Activated CD8-positive, alpha-beta T cell treated with anti-CD3 and anti-CD28 coated beads, Interleukin-2, amount 10 ng/mL, durations not matched to agents 7 days and 5 days (primary cell): ENCODE measurements at regions of chr20 and their contacts with region 1.

Region 1: DNA sequence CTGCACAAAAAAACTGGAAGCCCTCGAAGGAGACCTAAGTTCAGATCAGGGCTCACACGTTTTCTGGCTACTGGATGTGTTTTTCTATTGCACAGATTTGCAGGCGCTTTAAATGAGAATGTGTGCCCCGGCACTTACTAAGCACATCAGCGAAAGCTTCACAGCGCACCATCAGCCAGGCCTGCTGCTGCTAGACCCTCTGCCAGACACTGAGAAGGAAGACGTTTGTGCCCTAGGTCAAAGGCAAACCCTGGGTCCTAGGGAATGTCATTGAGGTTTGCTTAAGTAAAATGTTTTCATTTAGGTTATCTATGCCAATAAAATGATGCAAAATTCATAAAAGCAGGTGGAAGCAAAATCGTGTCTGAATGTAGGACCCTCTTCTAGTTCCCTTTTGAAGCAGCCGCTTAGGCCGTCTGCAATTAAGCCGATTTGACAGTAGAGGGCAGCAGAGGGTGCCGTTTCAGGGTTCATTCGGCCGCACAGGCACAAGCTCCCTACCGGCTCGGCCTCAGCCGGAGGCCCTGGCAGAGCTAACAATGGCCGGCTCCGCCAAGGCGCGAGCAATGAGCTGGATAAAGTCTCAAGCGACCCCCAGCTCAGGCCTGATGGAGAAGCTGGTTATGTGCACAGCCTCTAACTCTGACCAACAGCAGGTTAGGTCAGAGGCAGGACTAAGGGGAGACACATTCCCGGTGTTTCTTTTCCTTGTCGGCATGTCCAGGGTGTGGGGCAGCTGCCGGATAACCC is 107.2 kb upstream of the FOXA2 start:
- DNase-seq: peak; percentile 70
- ATAC-seq: peak; percentile 76
- H3K4me3 Mint-ChIP-seq: no peak overlapping the region
- H3K27ac Mint-ChIP-seq: no peak overlapping the region
- H3K4me1 Mint-ChIP-seq: no peaks in the 10 kb centered on the region
- H3K27me3 Mint-ChIP-seq: no peaks in the 10 kb centered on the region

Region 2: GRCh38 chr20:22623226-22623625 is 68.3 kb before region 1 on chr20:
- CTCF ChIA-PET with region 1: no interaction called
- POLR2A ChIA-PET with region 1: no interaction called
- DNase-seq: no peak
- ATAC-seq: no peak
- H3K4me3 Mint-ChIP-seq: no peak overlapping the region
- H3K27ac Mint-ChIP-seq: no peak overlapping the region
- H3K4me1 Mint-ChIP-seq: no peaks in the 10 kb centered on the region
- H3K27me3 Mint-ChIP-seq: no peaks in the 10 kb centered on the region

Region 3: GRCh38 chr20:22652681-22653588 is 38.6 kb before region 1 on chr20:
- CTCF ChIA-PET with region 1: no interaction called
- POLR2A ChIA-PET with region 1: no interaction called
- DNase-seq: no peak
- ATAC-seq: no peak
- H3K4me3 Mint-ChIP-seq: no peak overlapping the region
- H3K27ac Mint-ChIP-seq: no peak overlapping the region
- H3K4me1 Mint-ChIP-seq: no peaks in the 10 kb centered on the region
- H3K27me3 Mint-ChIP-seq: no peaks in the 10 kb centered on the region

Region 4: GRCh38 chr20:23235173-23236027 is 543.9 kb after region 1 on chr20:
- CTCF ChIA-PET with region 1: interaction called, 18 read pairs
- POLR2A ChIA-PET with region 1: no interaction called
- DNase-seq: peak; percentile 52
- ATAC-seq: peak; percentile 63
- H3K4me3 Mint-ChIP-seq: no peak overlapping the region
- H3K27ac Mint-ChIP-seq: no peak overlapping the region
- H3K4me1 Mint-ChIP-seq: no peaks in the 10 kb centered on the region
- H3K27me3 Mint-ChIP-seq: peaks cover 12% of the 10 kb centered on the region

Region 5: GRCh38 chr20:23340524-23340923 is 649.0 kb after region 1 on chr20:
- CTCF ChIA-PET with region 1: interaction called, 30 read pairs
- POLR2A ChIA-PET with region 1: no interaction called
- DNase-seq: peak; percentile 59
- ATAC-seq: no peak
- H3K4me3 Mint-ChIP-seq: no peak overlapping the region
- H3K27ac Mint-ChIP-seq: no peak overlapping the region
- H3K4me1 Mint-ChIP-seq: peaks cover 7% of the 10 kb centered on the region
- H3K27me3 Mint-ChIP-seq: no peaks in the 10 kb centered on the region